CD4-positive, alpha-beta memory T cell (primary cell): ENCODE measurements at regions of chr18 and their contacts with region 1.

Region 1: GRCh38 chr18:9913526-9914333 is at the start of gene VAPA:
- DNase-seq: peak; percentile 94 to 98 (median 97)
- H3K4me3 ChIP-seq: peak within 1 kb of the TSS; percentile 79 to 80
- H3K4me3 Mint-ChIP-seq: peak within 1 kb of the TSS; percentile 92 to 95 (median 95)
- H3K27ac ChIP-seq: peak within 1 kb of the TSS; percentile 97
- H3K27ac Mint-ChIP-seq: peak within 1 kb of the TSS; percentile 92 to 99 (median 97)
- H3K4me1 ChIP-seq: peaks cover 42% of the 10 kb centered on the region
- H3K4me1 Mint-ChIP-seq: peaks cover 19 to 32% (median 25%) of the 10 kb centered on the region in 4 donors
- H3K27me3 ChIP-seq: no peaks in the 10 kb centered on the region
- H3K27me3 Mint-ChIP-seq: peaks cover 6 to 7% of the 10 kb centered on the region in 2 donors
- total RNA-seq, gene VAPA: 113 to 116 TPM

Region 2: GRCh38 chr18:8704361-8705279 is 1209.1 kb before region 1 on chr18:
- CTCF ChIA-PET with region 1: no interaction called
- POLR2A ChIA-PET with region 1: no interaction called
- intact Hi-C with region 1: loop called (anchors 2 kb)
- DNase-seq: peak; percentile 76 to 86 (median 79)
- H3K4me3 ChIP-seq: peak overlapping the region; percentile 54 to 73
- H3K4me3 Mint-ChIP-seq: peak overlapping the region; percentile 87 to 96 (median 91)
- H3K27ac ChIP-seq: peak overlapping the region; percentile 48
- H3K27ac Mint-ChIP-seq: peak overlapping the region in 4 of 7 donors; percentile 50 to 79 (median 72)
- H3K4me1 ChIP-seq: peaks cover 26% of the 10 kb centered on the region
- H3K4me1 Mint-ChIP-seq: peaks cover 10 to 35% (median 15%) of the 10 kb centered on the region in 4 donors
- H3K27me3 ChIP-seq: peaks cover 29% of the 10 kb centered on the region
- H3K27me3 Mint-ChIP-seq: peaks cover 36 to 58% of the 10 kb centered on the region in 2 donors

Region 3: GRCh38 chr18:9136315-9137155 is 777.2 kb before region 1 on chr18 and contains the start of gene ANKRD12:
- CTCF ChIA-PET with region 1: no interaction called
- POLR2A ChIA-PET with region 1: interaction called, 4 read pairs
- intact Hi-C with region 1: loop called (anchors 2 kb)
- DNase-seq: peak; percentile 97 to 99 (median 98)
- H3K4me3 ChIP-seq: peak within 1 kb of the TSS; percentile 52 to 88
- H3K4me3 Mint-ChIP-seq: peak within 1 kb of the TSS; percentile 97 to 99 (median 98)
- H3K27ac ChIP-seq: peak within 1 kb of the TSS; percentile 90
- H3K27ac Mint-ChIP-seq: peak within 1 kb of the TSS; percentile 99 to 100 (median 99)
- H3K4me1 ChIP-seq: peaks cover 72% of the 10 kb centered on the region
- H3K4me1 Mint-ChIP-seq: peaks cover 43 to 85% (median 57%) of the 10 kb centered on the region in 4 donors
- H3K27me3 ChIP-seq: no peaks in the 10 kb centered on the region
- H3K27me3 Mint-ChIP-seq: peaks cover 0 to 2% of the 10 kb centered on the region in 2 donors
- total RNA-seq, gene ANKRD12: 262 to 280 TPM

Region 4: DNA sequence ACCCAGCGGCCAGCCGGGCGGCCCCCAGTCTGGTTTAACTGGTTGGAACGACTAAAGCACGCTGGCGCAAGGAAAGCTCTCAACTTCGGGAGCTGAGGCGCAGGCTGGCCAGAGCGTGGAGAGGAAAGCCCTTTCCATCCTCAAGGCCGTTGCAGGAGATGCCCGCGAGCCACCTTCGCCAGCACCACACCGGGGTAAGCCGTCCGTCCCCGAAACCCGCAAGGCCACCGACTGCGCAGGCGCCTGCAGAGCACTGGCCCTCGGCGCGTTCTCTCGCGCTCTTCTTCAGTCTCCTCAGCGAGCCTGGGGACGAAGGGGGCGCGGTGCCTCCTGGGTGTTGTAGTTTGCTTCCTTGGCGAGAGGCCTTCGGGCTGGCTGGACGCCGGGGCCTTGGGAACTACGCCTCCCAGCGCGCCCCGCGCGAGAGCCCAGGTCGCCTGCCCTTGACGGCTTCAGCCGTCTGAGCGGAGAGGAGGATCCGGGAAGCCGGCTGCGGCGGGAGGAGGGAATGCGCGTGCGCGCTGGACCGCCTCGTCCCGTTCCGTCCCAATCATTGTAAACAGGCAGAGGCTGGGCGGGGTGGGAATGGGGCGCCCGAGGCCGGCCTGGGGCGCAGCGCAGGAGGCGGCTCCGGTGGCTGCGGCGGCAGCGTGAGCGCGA is 438.6 kb before region 1 on chr18 and contains the start of gene RALBP1:
- CTCF ChIA-PET with region 1: no interaction called
- POLR2A ChIA-PET with region 1: no interaction called
- intact Hi-C with region 1: loop called (anchors 1 kb)
- DNase-seq: peak; percentile 96 to 98 (median 97)
- H3K4me3 ChIP-seq: peak within 1 kb of the TSS; percentile 86
- H3K4me3 Mint-ChIP-seq: peak within 1 kb of the TSS; percentile 94 to 99 (median 98)
- H3K27ac ChIP-seq: peak within 1 kb of the TSS; percentile 79
- H3K27ac Mint-ChIP-seq: peak within 1 kb of the TSS; percentile 95 to 98 (median 96)
- H3K4me1 ChIP-seq: peaks cover 24% of the 10 kb centered on the region
- H3K4me1 Mint-ChIP-seq: peaks cover 25 to 46% (median 33%) of the 10 kb centered on the region in 4 donors
- H3K27me3 ChIP-seq: no peaks in the 10 kb centered on the region
- H3K27me3 Mint-ChIP-seq: peaks cover 3 to 5% of the 10 kb centered on the region in 2 donors
- total RNA-seq, gene RALBP1: 44.9 to 49.9 TPM

Region 5: DNA sequence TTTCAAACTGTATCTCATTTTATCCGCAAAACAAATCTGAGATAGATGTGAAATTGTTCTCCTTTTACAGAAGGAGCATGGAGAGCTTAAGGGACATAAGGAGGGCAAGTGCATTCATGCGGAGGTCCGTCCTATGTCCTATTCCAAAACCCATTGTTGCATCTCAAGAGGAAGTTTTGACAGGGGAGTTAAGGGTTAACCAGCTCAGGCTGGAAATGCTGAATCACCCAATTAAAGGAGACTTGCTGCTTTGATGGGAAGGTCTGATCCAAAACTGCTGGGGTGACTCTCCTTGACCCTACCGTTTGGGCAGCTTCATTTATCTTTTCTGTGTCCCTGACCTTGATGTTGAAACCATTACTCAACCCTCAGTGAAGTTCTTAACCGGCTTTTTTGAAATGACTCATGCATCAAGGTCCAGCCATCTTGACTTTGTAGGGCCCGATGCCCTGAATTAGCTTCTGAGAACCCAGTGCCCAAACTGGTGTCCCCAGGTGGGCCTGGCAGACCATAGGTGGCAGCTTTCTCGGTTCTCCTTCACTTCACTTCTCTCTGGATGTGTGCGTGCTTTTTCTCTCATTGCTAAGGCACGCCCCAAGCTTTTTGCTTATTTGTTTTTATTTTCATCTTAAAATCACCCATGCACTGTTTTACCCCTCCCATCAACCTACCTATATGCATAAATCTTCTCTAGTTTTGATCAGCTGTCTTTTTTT is 43.9 kb before region 1 on chr18:
- CTCF ChIA-PET with region 1: no interaction called
- POLR2A ChIA-PET with region 1: no interaction called
- intact Hi-C with region 1: no loop called
- DNase-seq: no peak
- H3K4me3 ChIP-seq: no peak overlapping the region
- H3K4me3 Mint-ChIP-seq: no peak overlapping the region
- H3K27ac ChIP-seq: no peak overlapping the region
- H3K27ac Mint-ChIP-seq: no peak overlapping the region
- H3K4me1 ChIP-seq: no peaks in the 10 kb centered on the region
- H3K4me1 Mint-ChIP-seq: peaks cover 0 to 3% (median 2%) of the 10 kb centered on the region in 4 donors
- H3K27me3 ChIP-seq: no peaks in the 10 kb centered on the region
- H3K27me3 Mint-ChIP-seq: peaks cover 12 to 20% of the 10 kb centered on the region in 2 donors

Region 6: GRCh38 chr18:9925369-9925768 is 11.6 kb after region 1 on chr18:
- CTCF ChIA-PET with region 1: interaction called, 4 read pairs
- POLR2A ChIA-PET with region 1: interaction called, 27 read pairs
- intact Hi-C with region 1: loop called (anchors 1 kb)
- DNase-seq: no peak
- H3K4me3 ChIP-seq: no peak overlapping the region
- H3K4me3 Mint-ChIP-seq: no peak overlapping the region
- H3K27ac ChIP-seq: no peak overlapping the region
- H3K27ac Mint-ChIP-seq: no peak overlapping the region
- H3K4me1 ChIP-seq: peaks cover 96% of the 10 kb centered on the region
- H3K4me1 Mint-ChIP-seq: peaks cover 54 to 56% (median 55%) of the 10 kb centered on the region in 4 donors
- H3K27me3 ChIP-seq: no peaks in the 10 kb centered on the region
- H3K27me3 Mint-ChIP-seq: no peaks in the 10 kb centered on the region

Region 7: GRCh38 chr18:11851146-11851805 is 1937.5 kb after region 1 on chr18 and contains the start of gene CHMP1B:
- CTCF ChIA-PET with region 1: no interaction called
- POLR2A ChIA-PET with region 1: interaction called, 9 read pairs
- intact Hi-C with region 1: loop called (anchors 5 kb)
- DNase-seq: peak; percentile 94 to 96 (median 95)
- H3K4me3 ChIP-seq: peak within 1 kb of the TSS; percentile 71 to 100
- H3K4me3 Mint-ChIP-seq: peak within 1 kb of the TSS; percentile 100
- H3K27ac ChIP-seq: peak within 1 kb of the TSS; percentile 98
- H3K27ac Mint-ChIP-seq: peak within 1 kb of the TSS; percentile 100
- H3K4me1 ChIP-seq: peaks cover 32% of the 10 kb centered on the region
- H3K4me1 Mint-ChIP-seq: peaks cover 16 to 57% (median 32%) of the 10 kb centered on the region in 4 donors
- H3K27me3 ChIP-seq: no peaks in the 10 kb centered on the region
- H3K27me3 Mint-ChIP-seq: no peaks in the 10 kb centered on the region
- total RNA-seq, gene CHMP1B: 44.3 to 46.9 TPM